Posterior vena cava (tissue), 2 donors: ENCODE measurements at regions of chr15 and their contacts with region 1.

Region 1: GRCh38 chr15:69320977-69321554 is 22.4 kb downstream of the PAQR5 start:
- DNase-seq: no peak

Region 2: DNA sequence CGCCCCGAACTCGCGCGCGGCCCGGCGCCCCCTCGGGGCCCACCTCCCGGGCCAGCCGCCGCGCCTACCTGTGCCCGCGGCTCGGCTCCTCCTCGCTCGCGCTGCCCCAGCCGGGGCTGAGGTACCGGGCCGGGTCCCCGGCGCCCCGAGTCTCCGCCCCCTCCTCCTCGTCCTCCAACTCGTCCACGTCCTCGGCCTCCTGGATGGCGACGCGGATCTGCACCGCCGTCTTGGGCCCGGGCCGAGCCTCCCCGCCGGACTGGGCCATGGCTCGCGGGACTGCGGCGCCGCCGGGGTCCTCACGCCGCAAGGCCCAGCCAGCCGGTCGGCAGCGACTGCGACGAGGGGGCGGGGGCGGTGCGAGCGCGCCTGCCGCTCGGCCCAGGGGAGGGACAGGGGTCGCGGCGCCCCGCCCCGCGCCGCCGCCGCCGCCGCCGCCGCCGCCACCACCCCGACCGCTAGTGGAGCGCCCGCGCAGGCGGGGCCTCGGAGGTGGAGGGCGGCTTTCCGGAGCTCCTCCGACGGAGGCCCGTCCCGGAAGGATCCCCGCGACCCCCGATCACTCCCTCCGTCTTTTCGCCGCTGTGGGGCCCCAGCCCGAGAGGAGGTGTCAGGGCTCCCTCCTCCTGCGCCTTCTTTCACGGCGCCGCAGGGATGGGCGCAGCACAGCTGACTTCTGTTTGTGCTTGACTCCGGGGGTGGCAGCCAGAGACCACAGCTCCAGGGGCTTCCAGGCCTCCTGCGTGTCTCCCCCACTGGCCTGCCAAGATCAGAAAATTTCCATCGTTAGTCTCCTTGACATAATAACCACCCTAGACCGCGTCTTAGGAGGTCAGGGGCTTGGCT is 1533.0 kb after region 1 on chr15 and contains the start of gene LARP6:
- intact Hi-C with region 1: loop called in 1 of 2 experiments (anchors 5 kb)
- DNase-seq: no peak
- total RNA-seq, gene LARP6: 38.0 to 44.7 TPM